Activated T-helper 1 cell treated with anti-CD3 and anti-CD28 coated beads, Interleukin-12 subunit alpha, Interleukin-12 subunit beta, Interleukin-2, Interleukin-4 antibody, amounts not matched to agents 30 ng/mL and 10 ng/mL and 1 ng/mL, durations not matched to agents 14 hours and 24 hours and 36 hours (primary cell): ENCODE measurements at regions of chr4 and their contacts with region 1.

Region 1: DNA sequence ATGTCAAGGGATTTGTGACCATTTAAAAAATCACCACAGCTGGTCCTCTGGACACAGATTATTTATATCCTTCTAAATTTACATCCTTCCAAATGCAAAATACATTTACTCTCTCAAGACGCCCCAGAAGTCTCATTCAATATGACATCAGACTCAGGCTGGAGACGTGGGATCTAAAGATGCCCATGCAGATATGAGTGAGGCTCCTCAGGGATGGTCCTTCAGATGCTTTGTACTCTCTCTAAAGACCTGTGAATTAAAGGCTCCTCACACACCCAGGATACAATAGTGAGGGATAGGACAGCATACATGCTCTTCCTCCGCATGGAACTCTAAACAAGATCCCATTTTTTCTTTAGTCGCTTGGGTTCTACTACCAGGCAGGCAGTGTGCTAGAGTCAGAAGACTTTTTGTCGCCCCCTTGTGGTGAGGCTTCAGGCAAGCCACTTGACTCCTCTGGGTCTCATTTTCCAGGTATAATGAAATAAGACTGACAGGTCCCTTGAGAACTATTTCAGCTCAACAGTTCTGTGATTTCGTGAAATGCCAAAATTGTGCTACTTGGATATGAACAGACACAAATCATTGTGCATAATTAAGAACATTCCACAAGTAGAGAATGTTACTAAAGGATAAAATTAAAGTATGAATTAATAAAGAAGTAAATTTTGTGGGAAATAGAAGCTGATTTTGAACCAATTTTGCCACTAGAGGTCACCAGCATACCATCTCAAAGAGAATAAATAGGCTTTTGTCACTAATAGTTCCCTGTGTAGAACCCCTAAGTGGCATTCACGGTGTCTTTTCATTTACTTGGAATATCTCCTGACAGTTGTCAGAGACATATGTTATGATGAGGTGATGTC is 13.7 kb upstream of the SCOC start:
- DNase-seq: peak; percentile 50
- H3K4me3 Mint-ChIP-seq: no peak overlapping the region
- H3K27ac Mint-ChIP-seq: no peak overlapping the region
- H3K4me1 Mint-ChIP-seq: no peaks in the 10 kb centered on the region
- H3K27me3 Mint-ChIP-seq: peaks cover 4% of the 10 kb centered on the region

Region 2: DNA sequence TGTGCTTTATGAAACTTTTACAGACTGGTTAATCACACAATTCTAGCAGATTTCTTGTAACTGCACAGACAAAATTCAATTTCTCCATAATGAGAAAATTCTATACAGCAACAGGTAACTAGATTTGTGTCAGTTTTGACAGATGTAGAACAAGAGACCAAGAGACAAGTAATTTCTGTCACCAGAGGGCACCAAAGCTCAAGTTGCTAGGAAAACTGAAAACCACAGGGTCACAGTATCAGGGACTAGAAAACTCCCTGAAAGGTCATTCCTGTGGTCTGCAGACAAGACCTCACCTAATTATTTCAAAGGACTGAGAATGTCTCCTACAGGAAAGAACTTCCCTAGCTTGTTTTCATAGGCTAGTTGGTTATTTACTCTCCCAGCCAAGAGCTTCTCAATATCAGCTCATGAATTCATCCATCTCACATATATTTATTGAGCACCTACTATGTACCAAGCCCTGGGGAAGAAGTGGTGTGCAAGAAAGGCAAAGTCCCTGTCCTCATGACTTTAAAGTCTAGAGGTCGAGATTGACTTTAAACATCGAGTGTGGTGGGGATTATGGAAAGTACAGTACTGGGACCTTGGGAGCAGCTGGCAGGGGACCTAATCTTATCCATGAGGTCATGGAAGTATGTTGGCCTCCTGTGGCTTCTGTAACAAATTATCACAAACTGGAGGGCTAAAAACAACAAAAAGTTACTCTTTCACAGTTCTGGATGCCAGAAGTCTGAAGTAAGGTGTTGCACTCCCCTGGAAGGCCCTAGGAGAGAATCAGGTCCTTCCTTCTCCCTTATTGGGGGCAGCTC is 756.0 kb before region 1 on chr4:
- intact Hi-C with region 1: loop called (anchors 1 kb)
- DNase-seq: peak; percentile 9
- H3K4me3 Mint-ChIP-seq: no peak overlapping the region
- H3K27ac Mint-ChIP-seq: no peak overlapping the region
- H3K4me1 Mint-ChIP-seq: peaks cover 15% of the 10 kb centered on the region
- H3K27me3 Mint-ChIP-seq: peaks cover 2% of the 10 kb centered on the region

Region 3: DNA sequence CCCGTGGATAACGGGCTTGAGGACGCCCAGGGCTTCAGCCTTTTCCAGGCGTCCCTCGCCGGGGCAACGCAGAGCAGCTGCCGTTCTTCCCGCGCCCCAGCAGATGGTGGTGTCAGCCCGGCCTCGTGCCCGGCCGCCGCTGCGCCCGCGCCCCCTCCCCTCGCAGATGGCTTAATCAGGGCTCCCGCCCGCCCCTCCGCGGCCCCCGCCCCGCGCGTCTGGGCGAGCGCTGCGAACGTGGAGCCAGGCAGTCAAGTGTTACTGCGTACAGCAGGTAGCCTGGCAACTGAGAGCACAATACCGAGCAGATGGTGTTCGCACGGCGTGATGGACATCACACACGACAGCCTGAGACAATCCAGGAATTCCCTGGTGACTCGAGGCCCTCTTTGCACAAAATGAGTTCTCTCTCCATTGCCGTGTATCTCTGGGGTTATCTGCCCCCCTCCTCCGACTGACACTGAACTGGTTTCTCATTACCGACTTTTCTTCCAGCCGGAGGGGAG is 624.9 kb before region 1 on chr4:
- intact Hi-C with region 1: loop called (anchors 1 kb)
- DNase-seq: peak; percentile 42
- H3K4me3 Mint-ChIP-seq: peak overlapping the region; percentile 66
- H3K27ac Mint-ChIP-seq: no peak overlapping the region
- H3K4me1 Mint-ChIP-seq: peaks cover 6% of the 10 kb centered on the region
- H3K27me3 Mint-ChIP-seq: peaks cover 45% of the 10 kb centered on the region

Region 4: DNA sequence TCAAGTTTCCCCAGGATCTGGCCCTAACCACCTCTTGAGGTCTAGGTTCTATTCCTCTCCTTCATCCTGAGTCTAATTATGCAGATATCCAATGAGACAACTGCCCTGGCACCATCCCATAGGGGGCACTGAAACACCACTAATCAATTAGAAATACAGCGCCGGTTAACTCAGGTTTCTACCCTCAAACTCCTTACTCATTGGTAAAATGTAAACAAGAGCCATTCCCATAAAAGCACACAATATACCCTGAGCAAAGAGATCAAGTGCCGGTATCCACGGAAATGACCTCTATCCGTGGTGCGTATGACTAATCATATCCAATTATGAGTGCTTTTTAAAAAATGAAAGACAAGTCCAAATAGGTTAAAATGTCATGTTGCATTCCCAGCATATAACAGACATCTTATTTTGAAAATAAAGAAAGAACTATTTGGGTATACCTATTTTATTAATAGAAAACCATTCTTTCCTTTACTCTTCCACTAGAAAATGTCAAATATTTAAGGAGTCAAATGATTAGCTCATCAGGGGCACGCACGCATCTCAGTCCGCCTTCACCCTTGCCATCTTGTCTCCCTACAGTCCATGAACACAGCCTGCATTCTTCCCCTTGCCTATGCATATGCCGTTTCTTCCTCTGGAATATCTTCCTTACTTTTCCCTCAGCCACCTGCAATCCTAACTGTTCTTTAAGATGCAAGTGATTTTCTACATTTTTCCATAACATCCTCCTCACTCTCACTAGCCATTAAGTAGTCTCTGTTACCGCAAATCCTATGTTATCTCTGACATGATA is 346.9 kb before region 1 on chr4:
- intact Hi-C with region 1: loop called (anchors 1 kb)
- DNase-seq: peak; percentile 42
- H3K4me3 Mint-ChIP-seq: no peak overlapping the region
- H3K27ac Mint-ChIP-seq: no peak overlapping the region
- H3K4me1 Mint-ChIP-seq: peaks cover 10% of the 10 kb centered on the region
- H3K27me3 Mint-ChIP-seq: peaks cover 40% of the 10 kb centered on the region

Region 5: DNA sequence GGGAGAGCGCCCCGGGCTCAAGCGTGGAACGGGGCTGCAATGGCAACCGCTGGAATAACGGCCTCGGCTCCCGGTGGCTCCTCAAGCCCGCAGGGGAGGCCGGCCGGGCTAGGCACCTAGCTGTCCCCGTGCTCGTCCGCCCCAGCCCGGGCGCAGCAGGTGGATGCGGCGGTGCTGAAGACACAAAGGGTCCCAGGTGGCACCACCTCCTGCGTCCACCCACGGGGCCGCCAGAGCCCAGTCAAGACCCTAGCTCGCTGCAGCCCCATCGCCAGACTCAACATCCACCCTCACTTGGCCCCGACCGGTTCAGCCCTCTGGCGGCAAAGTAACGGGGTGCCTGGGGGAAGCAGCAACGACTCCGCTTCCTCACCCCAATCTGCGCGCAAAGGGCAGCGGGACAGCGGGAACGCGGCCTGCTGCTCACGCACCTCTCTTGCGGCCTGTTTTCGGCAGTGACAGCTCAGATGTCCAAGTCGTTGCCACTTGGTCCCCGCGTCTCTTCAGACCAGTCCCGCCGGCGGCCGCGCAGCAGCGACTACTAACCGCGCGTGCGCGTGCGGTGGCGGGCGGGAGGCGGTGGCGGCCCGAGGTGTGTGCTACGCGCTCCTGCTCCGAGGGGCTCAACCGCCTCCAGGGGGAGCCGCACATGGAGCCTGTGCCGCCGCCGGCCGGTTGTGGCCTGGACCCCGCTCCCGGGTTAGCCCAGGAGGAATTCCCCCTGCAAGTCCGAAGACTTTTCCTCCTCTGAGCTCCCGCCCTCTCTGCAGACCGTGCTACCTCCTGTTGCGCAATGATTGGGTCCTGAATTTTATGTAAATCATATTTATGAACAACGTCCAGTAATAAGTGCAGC is 67.5 kb after region 1 on chr4 and contains the start of gene CLGN:
- intact Hi-C with region 1: loop called (anchors 2 kb)
- DNase-seq: peak; percentile 21
- H3K4me3 Mint-ChIP-seq: peak within 1 kb of the TSS; percentile 76
- H3K27ac Mint-ChIP-seq: no peak within 1 kb of the TSS
- H3K4me1 Mint-ChIP-seq: peaks cover 11% of the 10 kb centered on the region
- H3K27me3 Mint-ChIP-seq: peaks cover 46% of the 10 kb centered on the region
- total RNA-seq, gene CLGN: not detected in 2 replicates

Region 6: DNA sequence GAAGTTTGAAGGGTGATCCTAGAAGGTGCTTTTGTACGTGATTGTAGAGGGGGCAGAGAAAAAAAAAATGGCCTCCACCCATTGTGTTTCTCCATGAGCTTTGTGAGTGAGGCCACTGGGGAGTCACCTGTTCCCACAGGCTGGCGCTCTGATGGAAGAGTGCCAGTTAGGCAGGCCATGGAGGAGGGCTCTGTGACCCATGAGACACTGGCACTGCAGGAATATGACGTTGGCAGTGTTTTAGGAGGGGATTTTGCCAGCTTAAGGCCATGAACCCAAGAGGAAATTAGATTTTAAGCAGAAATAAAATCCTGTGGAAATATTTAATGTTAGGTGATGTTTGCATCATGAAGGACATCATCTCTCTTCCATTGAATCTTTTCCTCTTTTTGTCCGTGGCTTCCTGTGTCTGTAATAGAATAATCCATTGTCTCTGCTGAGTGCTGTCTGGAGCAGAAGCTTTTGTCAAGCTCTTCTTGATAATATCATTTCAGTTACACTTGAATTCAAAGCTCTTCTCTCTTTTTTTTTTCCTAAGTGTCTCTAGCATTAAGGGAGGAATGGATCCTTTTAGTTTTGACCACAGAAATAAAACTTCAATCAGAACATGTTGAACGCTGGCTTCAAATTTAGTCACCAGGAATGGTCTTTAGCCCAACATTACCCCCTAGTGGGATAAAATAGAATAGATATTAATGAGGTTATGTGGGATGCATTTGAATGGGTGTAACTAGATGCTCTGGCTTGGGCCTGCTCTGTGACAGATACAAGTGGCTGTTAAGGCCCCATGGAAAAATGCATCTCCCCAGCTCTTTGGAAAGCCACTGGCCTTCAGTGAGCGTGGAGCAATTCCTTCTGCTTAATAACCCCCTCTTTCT is 250.0 kb after region 1 on chr4:
- intact Hi-C with region 1: loop called (anchors 1 kb)
- DNase-seq: no peak
- H3K4me3 Mint-ChIP-seq: no peak overlapping the region
- H3K27ac Mint-ChIP-seq: no peak overlapping the region
- H3K4me1 Mint-ChIP-seq: no peaks in the 10 kb centered on the region
- H3K27me3 Mint-ChIP-seq: peaks cover 13% of the 10 kb centered on the region

Region 7: GRCh38 chr4:140637836-140638235 is 278.0 kb after region 1 on chr4:
- intact Hi-C with region 1: loop called (anchors 1 kb)
- DNase-seq: peak; percentile 8
- H3K4me3 Mint-ChIP-seq: no peak overlapping the region
- H3K27ac Mint-ChIP-seq: no peak overlapping the region
- H3K4me1 Mint-ChIP-seq: no peaks in the 10 kb centered on the region
- H3K27me3 Mint-ChIP-seq: no peaks in the 10 kb centered on the region

Region 8: DNA sequence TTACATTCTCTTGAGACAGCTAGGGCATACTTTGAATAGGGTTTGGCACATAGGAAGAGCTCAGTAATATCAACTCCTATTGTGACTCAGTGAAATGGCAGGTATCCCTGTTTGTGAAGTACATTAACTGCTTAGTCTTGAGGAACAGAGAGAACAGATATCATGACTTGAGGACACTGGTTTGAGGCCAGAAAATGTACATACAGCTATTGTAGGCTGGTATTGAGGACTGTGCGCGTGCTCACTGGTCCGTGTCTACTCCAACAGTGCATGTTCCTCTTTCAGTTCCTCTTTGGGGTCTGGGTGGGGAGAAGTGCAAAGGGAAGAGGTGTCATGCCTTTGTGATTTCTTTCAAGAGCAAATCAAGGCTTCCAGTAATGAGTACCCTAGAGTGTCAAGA is 431.0 kb after region 1 on chr4:
- intact Hi-C with region 1: no loop called
- DNase-seq: no peak
- H3K4me3 Mint-ChIP-seq: no peak overlapping the region
- H3K27ac Mint-ChIP-seq: no peak overlapping the region
- H3K4me1 Mint-ChIP-seq: no peaks in the 10 kb centered on the region
- H3K27me3 Mint-ChIP-seq: peaks cover 2% of the 10 kb centered on the region